MCF 10A (cell line): ENCODE measurements at regions of chr5 and their contacts with region 1.

Region 1: DNA sequence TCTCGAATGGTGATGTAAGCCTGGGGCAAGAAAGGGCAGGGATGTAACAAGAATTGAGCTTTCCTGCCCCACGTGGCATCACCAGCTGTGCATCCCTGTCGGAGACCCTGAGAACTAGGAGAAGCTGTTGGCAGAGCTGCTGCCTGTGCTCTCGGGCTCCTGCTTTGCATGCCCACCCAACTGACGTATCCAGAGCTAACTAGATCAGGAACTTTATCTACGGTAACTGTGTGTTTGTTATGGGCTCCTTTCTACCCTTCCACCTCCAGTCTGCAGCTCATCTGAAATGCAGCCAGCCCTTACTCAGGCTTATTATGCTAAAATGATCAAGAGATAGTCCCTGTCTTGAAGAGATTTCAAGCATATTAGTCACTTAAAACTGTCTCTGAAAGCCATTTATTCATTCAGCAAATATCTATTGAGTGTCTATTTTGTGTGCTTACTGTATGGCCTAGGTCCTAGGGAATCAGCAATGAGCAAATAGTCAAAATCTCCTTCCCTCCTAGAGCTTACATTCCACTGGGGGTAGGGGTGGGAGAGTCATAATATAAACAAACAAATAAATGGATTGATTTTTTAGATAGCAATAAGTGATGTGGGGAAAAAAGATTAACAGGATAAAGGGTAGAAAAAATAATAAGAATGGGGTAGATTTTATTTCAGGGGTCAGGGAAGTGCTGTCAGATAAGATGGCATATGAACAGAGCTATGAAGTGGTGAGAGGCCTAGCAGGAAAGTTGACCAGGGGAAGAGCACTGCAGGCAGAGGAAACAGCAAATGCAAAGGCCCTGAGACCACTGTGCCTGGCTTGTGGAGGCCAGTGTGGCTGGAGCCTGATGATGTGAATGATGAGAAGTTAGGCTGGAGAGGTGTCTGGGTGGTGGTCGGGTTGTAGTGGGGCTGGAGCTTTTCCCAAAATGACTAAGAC is 118.2 kb downstream of the GALNT10 start:
- DNase-seq: no peak
- H3K4me3 Mint-ChIP-seq: no peak overlapping the region
- H3K27ac Mint-ChIP-seq: peak overlapping the region; percentile 0
- H3K4me1 Mint-ChIP-seq: peaks cover 26% of the 10 kb centered on the region
- H3K27me3 Mint-ChIP-seq: no peaks in the 10 kb centered on the region
- CTCF ChIP-seq: no peak

Region 2: GRCh38 chr5:154157483-154158378 is 151.0 kb before region 1 on chr5:
- CTCF ChIA-PET with region 1: no interaction called
- POLR2A ChIA-PET with region 1: no interaction called
- intact Hi-C with region 1: no loop called
- DNase-seq: no peak
- H3K4me3 Mint-ChIP-seq: no peak overlapping the region
- H3K27ac Mint-ChIP-seq: no peak overlapping the region
- H3K4me1 Mint-ChIP-seq: peaks cover 18% of the 10 kb centered on the region
- H3K27me3 Mint-ChIP-seq: peaks cover 8% of the 10 kb centered on the region
- CTCF ChIP-seq: peak; percentile 57

Region 3: DNA sequence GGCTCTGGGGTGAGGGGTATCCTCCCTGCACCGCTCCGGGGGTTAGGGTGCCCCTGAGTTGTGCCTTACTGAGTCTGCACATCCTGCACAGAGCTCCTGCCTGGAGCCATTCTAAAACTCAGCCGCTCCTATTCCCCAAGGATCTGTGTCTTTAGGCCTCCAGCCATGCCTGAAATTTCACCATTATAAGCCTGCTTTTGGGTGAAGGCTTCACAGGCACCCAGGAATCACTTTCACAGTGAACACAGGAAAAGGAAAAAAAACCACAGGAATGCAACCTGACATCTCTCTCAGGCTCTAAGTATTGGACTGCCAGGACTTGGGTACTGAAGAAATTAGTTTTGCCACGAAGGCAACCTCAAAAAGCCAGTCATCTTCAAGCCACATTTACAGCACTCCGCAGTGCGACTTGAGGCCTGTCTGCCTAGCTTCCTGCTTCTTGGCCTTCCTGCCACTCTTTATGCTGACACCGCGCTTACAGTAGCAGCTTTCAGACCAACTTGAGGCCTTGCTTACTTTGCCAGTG is 87.3 kb before region 1 on chr5:
- CTCF ChIA-PET with region 1: no interaction called
- POLR2A ChIA-PET with region 1: no interaction called
- intact Hi-C with region 1: loop called (anchors 5 kb)
- DNase-seq: peak; percentile 83
- H3K4me3 Mint-ChIP-seq: no peak overlapping the region
- H3K27ac Mint-ChIP-seq: peak overlapping the region; percentile 88
- H3K4me1 Mint-ChIP-seq: peaks cover 36% of the 10 kb centered on the region
- H3K27me3 Mint-ChIP-seq: no peaks in the 10 kb centered on the region
- CTCF ChIP-seq: no peak

Region 4: GRCh38 chr5:154421868-154422267 is 113.2 kb after region 1 on chr5:
- CTCF ChIA-PET with region 1: no interaction called
- POLR2A ChIA-PET with region 1: no interaction called
- intact Hi-C with region 1: no loop called
- DNase-seq: peak; percentile 45
- H3K4me3 Mint-ChIP-seq: no peak overlapping the region
- H3K27ac Mint-ChIP-seq: no peak overlapping the region
- H3K4me1 Mint-ChIP-seq: no peaks in the 10 kb centered on the region
- H3K27me3 Mint-ChIP-seq: no peaks in the 10 kb centered on the region
- CTCF ChIP-seq: peak; percentile 24